Activated T-helper 1 cell treated with anti-CD3 and anti-CD28 coated beads, Interleukin-12 subunit alpha, Interleukin-12 subunit beta, Interleukin-2, Interleukin-4 antibody, amounts not matched to agents 30 ng/mL and 10 ng/mL and 1 ng/mL, durations not matched to agents 14 hours and 24 hours and 36 hours (primary cell): ENCODE measurements at regions of chr6 and their contacts with region 1.

Region 1: DNA sequence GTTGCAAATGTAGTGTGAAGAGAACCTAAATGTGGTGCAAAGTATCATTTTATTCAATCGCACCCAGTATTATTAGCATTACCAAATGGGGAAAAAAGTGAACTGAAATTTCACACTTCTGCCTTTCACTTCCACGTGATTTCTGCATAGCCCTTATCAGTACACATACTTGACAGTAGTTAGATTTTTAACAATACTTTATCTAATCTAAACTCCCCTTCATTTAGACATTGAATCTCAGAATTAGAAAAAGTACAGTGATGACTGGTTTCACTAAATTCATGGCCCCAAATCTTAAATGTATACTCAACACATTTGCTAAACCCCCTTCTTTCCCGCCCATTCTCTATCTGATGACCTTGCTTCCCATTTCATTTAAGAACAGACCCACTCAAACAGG is 14.3 kb downstream of the STX7 start:
- DNase-seq: no peak
- H3K4me3 Mint-ChIP-seq: no peak overlapping the region
- H3K27ac Mint-ChIP-seq: no peak overlapping the region
- H3K4me1 Mint-ChIP-seq: peaks cover 33% of the 10 kb centered on the region
- H3K27me3 Mint-ChIP-seq: no peaks in the 10 kb centered on the region

Region 2: GRCh38 chr6:132341646-132342045 is 157.0 kb before region 1 on chr6:
- intact Hi-C with region 1: no loop called
- DNase-seq: no peak
- H3K4me3 Mint-ChIP-seq: no peak overlapping the region
- H3K27ac Mint-ChIP-seq: no peak overlapping the region
- H3K4me1 Mint-ChIP-seq: no peaks in the 10 kb centered on the region
- H3K27me3 Mint-ChIP-seq: peaks cover 4% of the 10 kb centered on the region

Region 3: GRCh38 chr6:132512638-132513632 is 14.3 kb after region 1 on chr6 and contains the start of gene STX7:
- intact Hi-C with region 1: loop called (anchors 1 kb)
- DNase-seq: peak; percentile 83
- H3K4me3 Mint-ChIP-seq: peak within 1 kb of the TSS; percentile 97
- H3K27ac Mint-ChIP-seq: peak within 1 kb of the TSS; percentile 93
- H3K4me1 Mint-ChIP-seq: peaks cover 25% of the 10 kb centered on the region
- H3K27me3 Mint-ChIP-seq: peaks cover 20% of the 10 kb centered on the region
- total RNA-seq, gene STX7: 17.3 and 17.5 TPM in 2 replicates